ENCODE measurements at regions of chr6 and their contacts with region 1.

Region 1: GRCh38 chr6:37314487-37315156 is 39.2 kb upstream of the RNF8 start:
- DNase-seq: peak; percentile 95 to 99 (median 98)
- ATAC-seq: peak; percentile 96
- H3K4me3 ChIP-seq: no peak overlapping the region
- H3K27ac ChIP-seq: peak overlapping the region; percentile 79
- H3K4me1 ChIP-seq: peaks cover 21 to 38% of the 10 kb centered on the region in 2 experiments
- H3K27me3 ChIP-seq: no peaks in the 10 kb centered on the region
- CTCF ChIP-seq: peak; percentile 95 to 99 (median 99)
- EP300 ChIP-seq: peak; percentile 99
- POLR2A ChIP-seq: no peak
- RAD21 ChIP-seq: peak; percentile 97

Region 2: GRCh38 chr6:37029249-37029971 is 285.2 kb before region 1 on chr6:
- CTCF ChIA-PET with region 1: interaction called, 9 read pairs
- POLR2A ChIA-PET with region 1: interaction called, 4 read pairs
- in situ Hi-C with region 1: loop called (anchors 5 kb)
- intact Hi-C with region 1: loop called (anchors 2 kb)
- DNase-seq: peak; percentile 91 to 97 (median 94)
- ATAC-seq: peak; percentile 99
- H3K4me3 ChIP-seq: no peak overlapping the region
- H3K27ac ChIP-seq: peak overlapping the region; percentile 46
- H3K4me1 ChIP-seq: peaks cover 15 to 63% of the 10 kb centered on the region in 2 experiments
- H3K27me3 ChIP-seq: no peaks in the 10 kb centered on the region
- CTCF ChIP-seq: peak; percentile 96 to 99 (median 97)
- EP300 ChIP-seq: peak; percentile 76
- POLR2A ChIP-seq: no peak
- RAD21 ChIP-seq: peak; percentile 99 to 100

Region 3: DNA sequence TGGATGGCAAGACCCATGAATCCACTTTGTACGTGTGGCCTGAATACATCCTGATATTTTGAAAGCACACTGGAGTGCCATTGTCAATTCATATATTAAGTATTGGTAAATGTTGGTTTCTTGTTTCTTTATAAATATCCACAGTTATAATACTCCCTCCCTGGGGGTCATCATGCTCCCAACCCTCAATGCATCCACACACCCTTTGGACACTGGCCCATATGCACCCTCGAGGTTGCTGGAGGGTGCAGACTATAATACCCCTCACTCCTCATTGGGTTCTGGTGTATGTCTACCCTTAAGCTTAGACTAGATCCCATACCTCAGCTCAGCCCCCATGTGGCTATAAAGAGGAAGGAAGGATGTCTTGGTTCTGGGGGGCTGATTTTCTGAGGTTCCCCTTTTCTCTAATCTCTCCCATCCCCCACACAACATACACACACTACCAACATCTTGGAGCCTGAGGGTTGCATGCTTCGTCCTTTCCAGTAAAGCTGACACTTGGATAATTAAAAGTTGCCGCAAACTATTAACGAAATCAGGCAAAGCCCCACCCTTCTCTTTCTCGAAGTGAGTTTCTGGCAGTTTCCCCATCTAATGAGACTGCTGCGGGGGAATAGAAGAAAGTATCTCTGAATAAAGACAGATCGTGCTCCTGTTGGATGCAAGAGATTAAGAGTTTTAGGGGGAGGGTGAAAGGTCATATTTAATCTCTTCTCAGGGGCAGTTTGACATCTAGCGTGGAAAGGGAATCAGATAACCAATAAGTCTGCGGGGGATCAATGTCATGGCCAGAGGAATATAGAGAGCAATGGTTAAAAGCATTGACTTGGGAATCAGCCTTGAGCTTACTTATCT is 137.3 kb before region 1 on chr6:
- CTCF ChIA-PET with region 1: no interaction called
- POLR2A ChIA-PET with region 1: no interaction called
- in situ Hi-C with region 1: no loop called
- intact Hi-C with region 1: loop called (anchors 2 kb)
- DNase-seq: peak; percentile 41 to 83 (median 62)
- ATAC-seq: peak; percentile 59
- H3K4me3 ChIP-seq: no peak overlapping the region
- H3K27ac ChIP-seq: peak overlapping the region; percentile 82
- H3K4me1 ChIP-seq: peaks cover 32 to 52% of the 10 kb centered on the region in 2 experiments
- H3K27me3 ChIP-seq: no peaks in the 10 kb centered on the region
- CTCF ChIP-seq: peak; percentile 43 to 61 (median 53); a peak in 5 of 6 replicates
- EP300 ChIP-seq: peak; percentile 56
- POLR2A ChIP-seq: no peak; the same call in 1 of the 2 replicates
- RAD21 ChIP-seq: peak; percentile 47 to 71

Region 4: DNA sequence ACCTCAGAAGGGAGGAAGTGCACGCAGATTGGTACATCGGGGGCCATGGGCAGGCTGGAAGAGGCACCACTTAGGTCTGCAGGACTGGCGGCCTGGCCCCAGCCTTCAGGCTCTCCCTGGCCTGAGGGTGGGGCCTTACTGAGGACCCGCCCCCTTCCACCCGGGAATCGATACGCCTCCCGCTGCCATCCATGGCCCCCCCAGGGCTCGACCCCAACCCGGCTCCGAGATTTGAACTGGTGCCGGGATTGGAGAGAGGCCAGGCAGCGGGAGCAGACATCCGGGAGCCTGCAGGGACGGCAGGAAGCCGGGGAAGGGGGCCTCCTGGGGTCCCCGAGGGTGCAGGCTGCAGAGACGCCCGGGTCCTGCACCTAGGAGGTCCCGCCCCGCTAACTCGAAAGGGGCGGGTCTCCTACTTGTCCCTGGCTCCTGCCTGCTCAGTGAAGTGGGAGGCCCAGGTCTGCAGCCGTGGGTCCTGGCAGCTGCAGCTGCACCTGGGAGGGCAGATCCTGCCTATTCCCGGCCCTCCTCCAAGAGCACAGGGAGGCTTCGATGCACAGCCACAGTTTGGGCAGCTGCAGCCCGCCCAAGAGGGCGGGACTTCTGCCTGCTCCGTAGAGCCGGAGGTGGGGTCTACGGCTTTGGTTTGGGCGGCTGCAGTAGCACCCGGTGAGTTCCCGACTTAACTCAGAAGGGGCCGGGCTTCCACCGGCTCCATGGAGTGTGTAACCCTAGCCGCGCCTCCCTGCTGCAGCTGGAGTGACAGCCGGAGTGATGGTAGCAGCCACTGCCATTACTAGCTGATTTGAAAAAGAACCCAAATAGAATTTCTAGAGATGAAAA is 92.3 kb before region 1 on chr6:
- CTCF ChIA-PET with region 1: no interaction called
- POLR2A ChIA-PET with region 1: no interaction called
- in situ Hi-C with region 1: no loop called
- intact Hi-C with region 1: loop called (anchors 2 kb)
- DNase-seq: peak; percentile 91 to 95 (median 93)
- ATAC-seq: peak; percentile 99
- H3K4me3 ChIP-seq: peak overlapping the region; percentile 52
- H3K27ac ChIP-seq: no peak overlapping the region
- H3K4me1 ChIP-seq: peaks cover 14 to 22% of the 10 kb centered on the region in 2 experiments; a peak in 4 of 5 replicates
- H3K27me3 ChIP-seq: no peaks in the 10 kb centered on the region
- CTCF ChIP-seq: peak in 2 of 3 experiments; percentile 14 to 44; a peak in 2 of 6 replicates
- EP300 ChIP-seq: no peak; the same call in 1 of the 2 replicates
- POLR2A ChIP-seq: no peak
- RAD21 ChIP-seq: peak; percentile 29 to 43; a peak in 3 of 4 replicates

Region 5: GRCh38 chr6:37257634-37258404 is 56.8 kb before region 1 on chr6 and contains the starts of genes TBC1D22B and TMEM217:
- CTCF ChIA-PET with region 1: no interaction called
- POLR2A ChIA-PET with region 1: interaction called, 3 read pairs
- in situ Hi-C with region 1: no loop called
- intact Hi-C with region 1: loop called (anchors 2 kb)
- DNase-seq: peak; percentile 97 to 100 (median 98)
- ATAC-seq: peak; percentile 98
- H3K4me3 ChIP-seq: peak within 1 kb of the TSS; percentile 91
- H3K27ac ChIP-seq: peak within 1 kb of the TSS; percentile 94
- H3K4me1 ChIP-seq: peaks cover 7 to 14% of the 10 kb centered on the region in 2 experiments; a peak in 4 of 5 replicates
- H3K27me3 ChIP-seq: no peaks in the 10 kb centered on the region
- CTCF ChIP-seq: no peak
- EP300 ChIP-seq: no peak
- POLR2A ChIP-seq: peak; percentile 91
- RAD21 ChIP-seq: peak in 1 of 2 experiments; percentile 47; a peak in 3 of 4 replicates
- polyA plus RNA-seq, gene TBC1D22B: 4.8 to 6.4 TPM
- polyA plus RNA-seq, gene TMEM217: 1.8 to 1.9 TPM

Region 6: GRCh38 chr6:37303932-37304363 is 10.7 kb before region 1 on chr6:
- CTCF ChIA-PET with region 1: no interaction called
- POLR2A ChIA-PET with region 1: interaction called, 25 read pairs
- in situ Hi-C with region 1: no loop called
- intact Hi-C with region 1: loop called (anchors 1 kb)
- DNase-seq: peak; percentile 52 to 74 (median 57)
- ATAC-seq: peak; percentile 83
- H3K4me3 ChIP-seq: no peak overlapping the region
- H3K27ac ChIP-seq: no peak overlapping the region
- H3K4me1 ChIP-seq: peaks cover 20 to 30% of the 10 kb centered on the region in 2 experiments
- H3K27me3 ChIP-seq: no peaks in the 10 kb centered on the region
- CTCF ChIP-seq: peak; percentile 73 to 86 (median 82)
- EP300 ChIP-seq: no peak
- POLR2A ChIP-seq: no peak
- RAD21 ChIP-seq: peak; percentile 35 to 73

Measured in K562 (cell line).